IMR-90 (cell line): ENCODE measurements at regions of chr16 and their contacts with region 1.

Region 1: DNA sequence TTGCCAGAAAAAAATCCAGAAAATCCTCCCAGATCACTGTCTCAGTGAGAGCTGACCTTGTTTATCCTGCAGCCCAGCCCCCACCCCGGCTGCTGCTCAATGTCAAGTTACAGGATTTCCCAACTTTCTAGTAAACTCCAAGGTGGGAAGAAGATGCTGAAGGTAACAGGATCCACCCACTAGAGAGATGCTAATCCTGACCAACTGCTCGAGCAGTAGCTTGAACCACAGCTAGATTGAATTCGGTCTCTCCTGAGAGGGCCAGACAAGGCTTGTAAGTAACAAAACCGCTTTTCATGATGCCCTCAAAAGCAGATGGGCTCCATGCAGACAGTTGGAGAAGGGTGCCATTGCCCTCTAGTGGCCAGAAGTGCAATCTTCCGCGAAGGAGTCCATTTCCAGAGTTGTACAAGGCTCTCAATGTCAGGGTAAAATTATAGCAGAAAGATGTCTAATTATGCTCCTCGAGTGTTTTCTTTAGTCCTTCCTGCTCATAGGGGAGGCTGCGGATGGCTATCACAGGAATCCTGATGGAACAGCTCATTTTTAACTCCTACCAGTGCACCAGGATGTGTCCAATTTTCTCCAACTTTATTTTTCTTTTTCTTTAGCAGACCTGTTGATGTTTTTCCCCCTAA is 3.9 kb downstream of the CDH11 start:
- DNase-seq: peak; percentile 90
- ATAC-seq: peak; percentile 7
- H3K4me3 ChIP-seq: 0 out of 2 replicates have a peak overlapping the region, but pooled peaks have one; percentile 8
- H3K27ac ChIP-seq: peak overlapping the region; percentile 69
- H3K4me1 ChIP-seq: peaks cover 4% of the 10 kb centered on the region
- H3K27me3 ChIP-seq: no peaks in the 10 kb centered on the region
- CTCF ChIP-seq: peak; percentile 95
- POLR2A ChIP-seq: peak; percentile 48
- RAD21 ChIP-seq: peak; percentile 93

Region 2: DNA sequence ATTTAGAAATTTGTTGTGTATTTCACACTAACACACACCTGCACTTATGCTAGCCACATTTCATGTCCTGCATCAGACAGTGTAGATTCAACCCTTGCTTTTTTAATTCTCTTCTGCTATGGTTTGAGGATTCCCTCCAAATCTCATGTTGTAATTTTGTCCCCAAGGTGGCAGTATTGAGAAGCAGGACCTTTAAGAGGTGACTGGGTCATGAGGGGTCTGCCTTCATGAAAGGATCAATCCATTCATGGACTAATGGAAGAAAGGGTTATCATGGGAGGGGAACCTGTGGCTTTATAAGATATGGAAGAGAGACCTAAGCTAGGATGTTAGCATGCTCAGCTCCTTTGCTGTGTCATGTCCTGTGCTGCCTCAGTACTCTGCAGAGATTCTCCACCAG is 1028.2 kb before region 1 on chr16:
- CTCF ChIA-PET with region 1: no interaction called
- POLR2A ChIA-PET with region 1: no interaction called
- dilution Hi-C with region 1: no loop called
- in situ Hi-C with region 1: loop called (anchors 25 kb)
- intact Hi-C with region 1: loop called (anchors 5 kb)
- DNase-seq: peak; percentile 11
- ATAC-seq: peak; percentile 65; the same call in 1 of the 2 replicates
- H3K4me3 ChIP-seq: no peak overlapping the region
- H3K27ac ChIP-seq: no peak overlapping the region
- H3K4me1 ChIP-seq: peaks cover 4% of the 10 kb centered on the region; the same call in 1 of the 2 replicates
- H3K27me3 ChIP-seq: no peaks in the 10 kb centered on the region
- CTCF ChIP-seq: peak; percentile 47
- POLR2A ChIP-seq: no peak
- RAD21 ChIP-seq: peak; percentile 51

Region 3: GRCh38 chr16:64784635-64785034 is 333.3 kb before region 1 on chr16:
- CTCF ChIA-PET with region 1: no interaction called
- POLR2A ChIA-PET with region 1: no interaction called
- dilution Hi-C with region 1: no loop called
- in situ Hi-C with region 1: no loop called
- intact Hi-C with region 1: no loop called
- DNase-seq: no peak
- ATAC-seq: no peak
- H3K4me3 ChIP-seq: no peak overlapping the region
- H3K27ac ChIP-seq: no peak overlapping the region
- H3K4me1 ChIP-seq: no peaks in the 10 kb centered on the region
- H3K27me3 ChIP-seq: no peaks in the 10 kb centered on the region; the same call in 1 of the 2 replicates
- CTCF ChIP-seq: no peak
- POLR2A ChIP-seq: no peak
- RAD21 ChIP-seq: no peak

Region 4: DNA sequence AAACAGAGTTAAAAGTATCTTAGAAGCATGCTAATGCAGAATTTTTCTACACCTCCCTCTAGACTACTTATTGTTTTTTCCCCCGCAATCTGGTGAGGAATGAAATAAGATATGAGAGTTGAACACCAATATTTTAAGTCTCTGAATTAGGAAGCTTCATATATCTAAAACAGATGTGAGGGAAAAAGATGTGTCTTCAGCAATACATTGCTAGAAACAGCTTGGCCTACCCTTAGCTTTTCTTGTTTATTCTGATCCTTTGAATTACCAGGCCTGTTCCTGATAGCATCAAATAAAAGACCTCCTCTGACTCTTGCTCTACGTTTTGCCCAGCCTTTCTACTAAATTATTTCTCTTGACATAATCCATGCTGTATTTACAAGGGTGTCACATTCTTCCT is 217.9 kb before region 1 on chr16:
- CTCF ChIA-PET with region 1: no interaction called
- POLR2A ChIA-PET with region 1: no interaction called
- dilution Hi-C with region 1: no loop called
- in situ Hi-C with region 1: no loop called
- intact Hi-C with region 1: no loop called
- DNase-seq: no peak
- ATAC-seq: no peak
- H3K4me3 ChIP-seq: no peak overlapping the region
- H3K27ac ChIP-seq: no peak overlapping the region
- H3K4me1 ChIP-seq: no peaks in the 10 kb centered on the region
- H3K27me3 ChIP-seq: no peaks in the 10 kb centered on the region
- CTCF ChIP-seq: no peak
- POLR2A ChIP-seq: no peak
- RAD21 ChIP-seq: no peak

Region 5: GRCh38 chr16:65315081-65315780 is 197.3 kb after region 1 on chr16:
- CTCF ChIA-PET with region 1: no interaction called
- POLR2A ChIA-PET with region 1: no interaction called
- dilution Hi-C with region 1: no loop called
- in situ Hi-C with region 1: no loop called
- intact Hi-C with region 1: loop called (anchors 5 kb)
- DNase-seq: no peak
- ATAC-seq: no peak
- H3K4me3 ChIP-seq: no peak overlapping the region
- H3K27ac ChIP-seq: no peak overlapping the region
- H3K4me1 ChIP-seq: peaks cover 21% of the 10 kb centered on the region
- H3K27me3 ChIP-seq: no peaks in the 10 kb centered on the region
- CTCF ChIP-seq: no peak
- POLR2A ChIP-seq: no peak
- RAD21 ChIP-seq: no peak

Region 6: DNA sequence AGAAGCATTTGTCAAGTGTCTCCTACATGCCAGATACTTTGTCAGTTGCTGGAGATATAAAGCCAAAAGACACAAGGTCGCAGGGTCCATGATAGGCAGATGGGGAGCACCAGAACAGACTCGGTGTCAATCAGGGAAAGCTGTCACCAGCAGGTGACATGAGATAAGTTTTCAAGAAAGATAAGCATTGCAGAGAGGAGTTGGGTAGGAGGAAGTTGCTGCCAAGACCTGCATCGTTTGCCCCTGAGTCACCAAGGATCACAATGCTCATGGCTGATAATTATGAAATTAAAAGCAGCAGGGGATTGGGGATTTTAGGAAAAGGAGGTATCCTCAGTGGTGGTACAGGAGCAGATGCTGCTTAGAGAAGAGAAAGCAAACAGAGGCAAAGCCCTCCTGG is 555.0 kb after region 1 on chr16:
- CTCF ChIA-PET with region 1: no interaction called
- POLR2A ChIA-PET with region 1: no interaction called
- dilution Hi-C with region 1: no loop called
- in situ Hi-C with region 1: no loop called
- intact Hi-C with region 1: loop called (anchors 10 kb)
- DNase-seq: peak; percentile 22
- ATAC-seq: no peak; the same call in 1 of the 2 replicates
- H3K4me3 ChIP-seq: no peak overlapping the region
- H3K27ac ChIP-seq: no peak overlapping the region
- H3K4me1 ChIP-seq: peaks cover 7% of the 10 kb centered on the region; the same call in 1 of the 2 replicates
- H3K27me3 ChIP-seq: peaks cover 3% of the 10 kb centered on the region
- CTCF ChIP-seq: no peak
- POLR2A ChIP-seq: no peak
- RAD21 ChIP-seq: no peak

Region 7: GRCh38 chr16:66070140-66070917 is 952.4 kb after region 1 on chr16:
- CTCF ChIA-PET with region 1: no interaction called
- POLR2A ChIA-PET with region 1: no interaction called
- dilution Hi-C with region 1: no loop called
- in situ Hi-C with region 1: no loop called
- intact Hi-C with region 1: loop called (anchors 5 kb)
- DNase-seq: peak; percentile 83
- ATAC-seq: peak; percentile 93
- H3K4me3 ChIP-seq: no peak overlapping the region
- H3K27ac ChIP-seq: peak overlapping the region; percentile 58; the same call in 1 of the 2 replicates
- H3K4me1 ChIP-seq: peaks cover 7% of the 10 kb centered on the region
- H3K27me3 ChIP-seq: no peaks in the 10 kb centered on the region; the same call in 1 of the 2 replicates
- CTCF ChIP-seq: no peak
- POLR2A ChIP-seq: no peak
- RAD21 ChIP-seq: no peak

Region 8: GRCh38 chr16:66270333-66270927 is 1152.5 kb after region 1 on chr16:
- CTCF ChIA-PET with region 1: interaction called, 3 read pairs
- POLR2A ChIA-PET with region 1: no interaction called
- dilution Hi-C with region 1: no loop called
- in situ Hi-C with region 1: loop called (anchors 5 kb)
- intact Hi-C with region 1: loop called (anchors 1 kb)
- DNase-seq: peak; percentile 54
- ATAC-seq: peak; percentile 72
- H3K4me3 ChIP-seq: 0 out of 2 replicates have a peak overlapping the region, but pooled peaks have one; percentile 20
- H3K27ac ChIP-seq: peak overlapping the region; percentile 86
- H3K4me1 ChIP-seq: peaks cover 25% of the 10 kb centered on the region
- H3K27me3 ChIP-seq: no peaks in the 10 kb centered on the region
- CTCF ChIP-seq: peak; percentile 97
- POLR2A ChIP-seq: 0 out of 2 replicates have a peak, but pooled peaks have one; percentile 37
- RAD21 ChIP-seq: peak; percentile 97